ENCODE measurements at regions of chr1 and their contacts with region 1.

Region 1: GRCh38 chr1:107196973-107197562 is 56.2 kb downstream of the NTNG1 start:
- DNase-seq: peak in 2 of 9 experiments; percentile 5 to 7
- ATAC-seq: no peak
- H3K4me3 ChIP-seq: no peak overlapping the region
- H3K4me3 Mint-ChIP-seq: no peak overlapping the region
- H3K27ac ChIP-seq: no peak overlapping the region
- H3K27ac Mint-ChIP-seq: no peak overlapping the region
- H3K4me1 ChIP-seq: no peaks in the 10 kb centered on the region
- H3K4me1 Mint-ChIP-seq: no peaks in the 10 kb centered on the region
- H3K27me3 ChIP-seq: no peaks in the 10 kb centered on the region
- H3K27me3 Mint-ChIP-seq: no peaks in the 10 kb centered on the region
- CTCF ChIP-seq: no peak

Region 2: GRCh38 chr1:107124694-107125093 is 72.4 kb before region 1 on chr1:
- CTCF ChIA-PET with region 1: no interaction called
- POLR2A ChIA-PET with region 1: no interaction called
- intact Hi-C with region 1: no loop called
- DNase-seq: no peak
- ATAC-seq: no peak
- H3K4me3 ChIP-seq: no peak overlapping the region
- H3K4me3 Mint-ChIP-seq: no peak overlapping the region
- H3K27ac ChIP-seq: no peak overlapping the region
- H3K27ac Mint-ChIP-seq: no peak overlapping the region
- H3K4me1 ChIP-seq: no peaks in the 10 kb centered on the region
- H3K4me1 Mint-ChIP-seq: no peaks in the 10 kb centered on the region
- H3K27me3 ChIP-seq: no peaks in the 10 kb centered on the region
- H3K27me3 Mint-ChIP-seq: peaks cover 15% of the 10 kb centered on the region
- CTCF ChIP-seq: no peak

Region 3: GRCh38 chr1:107153014-107153413 is 44.1 kb before region 1 on chr1:
- CTCF ChIA-PET with region 1: no interaction called
- POLR2A ChIA-PET with region 1: no interaction called
- intact Hi-C with region 1: loop called in 1 of 2 experiments (anchors 1 kb)
- DNase-seq: no peak
- ATAC-seq: no peak
- H3K4me3 ChIP-seq: no peak overlapping the region
- H3K4me3 Mint-ChIP-seq: no peak overlapping the region
- H3K27ac ChIP-seq: no peak overlapping the region
- H3K27ac Mint-ChIP-seq: no peak overlapping the region
- H3K4me1 ChIP-seq: no peaks in the 10 kb centered on the region
- H3K4me1 Mint-ChIP-seq: no peaks in the 10 kb centered on the region
- H3K27me3 ChIP-seq: no peaks in the 10 kb centered on the region
- H3K27me3 Mint-ChIP-seq: peaks cover 13% of the 10 kb centered on the region
- CTCF ChIP-seq: no peak

Region 4: DNA sequence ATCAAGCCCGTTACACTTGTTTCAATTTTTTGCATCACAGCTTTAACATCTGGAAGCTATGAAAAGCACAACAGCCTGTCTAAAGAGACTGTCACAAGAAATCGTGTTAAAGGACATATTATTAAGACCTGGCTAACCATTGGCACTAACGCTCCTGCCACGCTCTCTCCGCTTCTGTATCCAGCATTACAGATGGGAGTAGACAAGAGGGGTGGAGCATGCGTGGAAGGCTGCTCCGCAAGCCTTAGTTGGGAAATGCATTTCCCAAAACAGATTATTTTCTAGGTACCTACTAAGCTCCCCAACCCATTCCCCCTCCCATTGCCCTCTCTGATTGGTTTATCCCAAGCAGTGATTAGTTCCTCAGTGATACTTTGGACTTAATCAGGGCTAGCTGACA is 16.2 kb after region 1 on chr1:
- CTCF ChIA-PET with region 1: no interaction called
- POLR2A ChIA-PET with region 1: no interaction called
- intact Hi-C with region 1: no loop called
- DNase-seq: no peak
- ATAC-seq: no peak
- H3K4me3 ChIP-seq: no peak overlapping the region
- H3K4me3 Mint-ChIP-seq: no peak overlapping the region
- H3K27ac ChIP-seq: no peak overlapping the region
- H3K27ac Mint-ChIP-seq: no peak overlapping the region
- H3K4me1 ChIP-seq: no peaks in the 10 kb centered on the region
- H3K4me1 Mint-ChIP-seq: no peaks in the 10 kb centered on the region
- H3K27me3 ChIP-seq: no peaks in the 10 kb centered on the region
- H3K27me3 Mint-ChIP-seq: peaks cover 2% of the 10 kb centered on the region
- CTCF ChIP-seq: no peak

Region 5: DNA sequence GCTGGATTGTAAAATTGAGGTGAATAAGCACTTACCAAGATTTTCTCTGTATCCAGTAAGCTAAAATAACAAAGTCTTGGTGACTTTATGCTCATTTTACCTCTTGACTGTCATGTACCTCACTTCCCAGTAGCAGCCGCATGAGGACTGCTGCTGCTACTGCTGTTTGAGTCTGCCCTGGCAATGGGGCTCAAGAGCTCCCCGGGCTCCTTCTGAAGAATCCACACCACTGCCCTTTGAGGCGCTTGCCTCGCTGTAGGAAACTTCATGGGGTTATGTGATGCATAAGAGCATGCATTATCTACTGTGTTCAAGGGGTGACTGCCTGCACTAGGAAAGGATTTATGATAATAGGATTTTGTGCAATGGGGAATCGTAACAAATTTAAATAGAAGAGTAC is 57.2 kb after region 1 on chr1:
- CTCF ChIA-PET with region 1: no interaction called
- POLR2A ChIA-PET with region 1: no interaction called
- intact Hi-C with region 1: no loop called
- DNase-seq: no peak
- ATAC-seq: no peak
- H3K4me3 ChIP-seq: no peak overlapping the region
- H3K4me3 Mint-ChIP-seq: no peak overlapping the region
- H3K27ac ChIP-seq: no peak overlapping the region
- H3K27ac Mint-ChIP-seq: no peak overlapping the region
- H3K4me1 ChIP-seq: no peaks in the 10 kb centered on the region
- H3K4me1 Mint-ChIP-seq: peaks cover 3% of the 10 kb centered on the region
- H3K27me3 ChIP-seq: no peaks in the 10 kb centered on the region
- H3K27me3 Mint-ChIP-seq: no peaks in the 10 kb centered on the region
- CTCF ChIP-seq: no peak

Measured in CD8-positive, alpha-beta T cell (primary cell).